ENCODE measurements at regions of chr7 and their contacts with region 1.

Region 1: GRCh38 chr7:18552943-18553584 is 57.5 kb downstream of the HDAC9 start:
- DNase-seq: no peak
- H3K4me3 ChIP-seq: no peak overlapping the region
- H3K27ac ChIP-seq: no peak overlapping the region
- H3K4me1 ChIP-seq: no peaks in the 10 kb centered on the region; the same call in 1 of the 2 replicates
- H3K27me3 ChIP-seq: no peaks in the 10 kb centered on the region
- CTCF ChIP-seq: no peak

Region 2: DNA sequence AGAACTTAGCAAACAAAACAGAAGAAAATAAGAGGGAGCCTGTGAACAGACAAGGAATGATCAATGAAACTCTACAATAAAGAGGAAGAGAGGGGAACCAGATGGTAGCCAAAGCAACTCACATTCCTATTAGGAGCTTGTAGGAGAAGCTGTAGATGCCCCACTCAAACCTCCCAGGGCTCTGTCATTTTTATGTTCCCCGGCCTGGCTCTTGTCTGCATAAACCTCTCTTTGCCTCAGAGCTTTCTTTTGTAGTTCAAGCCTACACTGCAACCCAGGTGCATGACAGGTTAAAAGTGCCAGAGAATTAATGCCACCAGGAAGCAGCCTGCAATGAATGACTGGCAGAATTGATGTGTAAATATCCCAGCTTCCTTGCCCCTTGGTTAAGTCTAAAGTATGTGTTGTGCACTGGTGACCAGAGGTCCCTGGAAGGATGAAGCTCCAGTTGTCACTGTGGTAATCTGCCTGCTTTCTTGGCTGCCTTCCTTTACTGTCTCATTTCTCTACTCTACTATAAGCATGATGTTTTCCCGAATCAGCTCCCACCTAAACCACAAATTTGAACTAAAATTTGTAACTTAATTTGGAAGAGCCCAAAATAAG is 17.2 kb before region 1 on chr7:
- CTCF ChIA-PET with region 1: no interaction called
- POLR2A ChIA-PET with region 1: interaction called, 12 read pairs
- intact Hi-C with region 1: no loop called
- DNase-seq: no peak
- H3K4me3 ChIP-seq: no peak overlapping the region
- H3K27ac ChIP-seq: no peak overlapping the region
- H3K4me1 ChIP-seq: no peaks in the 10 kb centered on the region; the same call in 1 of the 2 replicates
- H3K27me3 ChIP-seq: no peaks in the 10 kb centered on the region
- CTCF ChIP-seq: no peak